PC-9 (cell line): ENCODE measurements at regions of chr12 and their contacts with region 1.

Region 1: DNA sequence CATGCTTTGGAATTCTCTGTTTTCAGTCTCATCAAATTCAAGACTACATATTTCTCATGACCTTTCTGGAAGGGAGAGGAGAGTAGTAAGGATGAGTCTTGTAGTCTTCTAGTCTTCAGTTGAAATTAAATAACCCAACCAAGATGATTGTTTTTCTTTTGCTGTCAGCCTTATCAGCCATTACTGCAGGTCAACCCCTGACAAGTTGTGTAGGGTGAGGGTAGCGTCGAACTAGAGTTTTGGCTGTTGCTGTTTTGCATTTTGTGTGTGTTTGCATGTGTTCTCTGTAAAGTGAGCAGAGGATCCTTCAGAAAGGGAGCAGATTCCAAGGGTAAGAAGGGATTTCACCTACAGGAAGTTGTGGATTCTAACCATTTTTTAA is 28.4 kb downstream of the DIP2B start:
- DNase-seq: no peak
- H3K4me3 ChIP-seq: peak overlapping the region; percentile 30; the same call in 1 of the 2 replicates
- H3K27ac ChIP-seq: peak overlapping the region; percentile 98
- H3K4me1 ChIP-seq: peaks cover 85% of the 10 kb centered on the region
- H3K27me3 ChIP-seq: no peaks in the 10 kb centered on the region
- CTCF ChIP-seq: no peak

Region 2: GRCh38 chr12:50572271-50572670 is 39.1 kb after region 1 on chr12:
- CTCF ChIA-PET with region 1: no interaction called
- POLR2A ChIA-PET with region 1: no interaction called
- intact Hi-C with region 1: loop called (anchors 2 kb)
- DNase-seq: peak; percentile 24 to 91
- H3K4me3 ChIP-seq: no peak overlapping the region
- H3K27ac ChIP-seq: peak overlapping the region; percentile 54
- H3K4me1 ChIP-seq: peaks cover 52% of the 10 kb centered on the region
- H3K27me3 ChIP-seq: no peaks in the 10 kb centered on the region
- CTCF ChIP-seq: no peak

Region 3: GRCh38 chr12:50637870-50638481 is 104.8 kb after region 1 on chr12:
- CTCF ChIA-PET with region 1: no interaction called
- POLR2A ChIA-PET with region 1: interaction called, 10 read pairs
- intact Hi-C with region 1: no loop called
- DNase-seq: peak in 1 of 2 experiments; percentile 59
- H3K4me3 ChIP-seq: no peak overlapping the region
- H3K27ac ChIP-seq: peak overlapping the region; percentile 45
- H3K4me1 ChIP-seq: peaks cover 43% of the 10 kb centered on the region
- H3K27me3 ChIP-seq: no peaks in the 10 kb centered on the region
- CTCF ChIP-seq: peak; percentile 78